ENCODE measurements at regions of chr14 and their contacts with region 1.

Region 1: GRCh38 chr14:71651228-71651627 is 281.0 kb upstream of the RGS6 start:
- DNase-seq: no peak

Region 2: DNA sequence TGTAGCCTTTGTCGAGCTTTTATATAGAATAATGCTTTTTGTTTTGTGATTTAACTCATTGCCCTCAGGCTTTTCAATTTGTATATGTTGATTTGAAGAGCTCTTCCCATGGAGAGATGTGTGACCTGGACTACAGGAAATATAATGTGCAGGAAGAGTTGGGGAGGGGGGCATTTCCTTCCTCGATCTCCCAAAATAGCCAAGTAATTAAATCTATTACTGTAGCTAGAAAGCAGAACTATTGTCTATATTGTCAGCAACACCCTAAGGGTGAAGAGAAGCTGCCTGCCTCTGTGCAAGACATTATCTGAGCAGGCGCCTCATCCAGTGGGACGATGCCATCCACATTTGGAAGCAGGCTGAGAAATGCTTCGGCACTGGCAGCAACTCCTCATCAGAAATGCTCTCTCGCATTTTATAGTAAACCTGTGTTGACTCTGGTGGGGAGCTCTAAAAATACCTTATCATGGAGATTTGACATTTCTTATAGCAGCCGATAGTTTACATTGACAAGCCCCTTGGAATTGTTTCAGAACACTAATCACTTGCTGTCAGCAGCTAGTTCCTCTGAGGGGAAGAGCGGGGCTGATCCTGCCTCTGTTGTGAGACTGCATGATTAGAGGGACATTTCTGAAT is 111.5 kb before region 1 on chr14:
- intact Hi-C with region 1: loop called in 1 of 2 experiments (anchors 5 kb)
- DNase-seq: no peak

Region 3: GRCh38 chr14:71666571-71667145 is 15.4 kb after region 1 on chr14:
- intact Hi-C with region 1: loop called in 1 of 2 experiments (anchors 1 kb)
- DNase-seq: no peak

Region 4: DNA sequence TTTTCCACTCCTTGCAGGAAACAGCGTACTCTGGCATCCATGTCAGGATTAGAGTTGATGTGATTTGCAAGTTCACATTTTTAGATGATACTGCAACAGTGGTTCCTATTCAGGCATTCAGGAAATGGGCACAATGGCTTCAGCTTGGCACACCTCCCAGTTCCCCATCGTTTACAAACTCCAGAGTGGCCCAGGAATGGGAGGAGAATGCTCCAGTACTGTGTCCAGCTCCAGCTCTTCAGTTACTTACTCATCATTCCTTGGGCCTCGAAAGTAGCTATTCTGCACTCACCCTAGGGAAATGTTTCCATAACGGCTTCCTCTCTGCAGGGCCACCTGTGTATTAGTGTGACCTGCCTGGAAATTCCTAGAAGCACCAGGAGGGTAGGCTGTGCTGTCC is 41.3 kb after region 1 on chr14:
- intact Hi-C with region 1: no loop called
- DNase-seq: no peak

Measured in posterior vena cava (tissue), 2 donors.